Naive thymus-derived CD8-positive, alpha-beta T cell (primary cell): ENCODE measurements at regions of chr15 and their contacts with region 1.

Region 1: GRCh38 chr15:40338041-40338657 is 2.6 kb downstream of the CCDC9B start:
- DNase-seq: peak; percentile 64 to 87 (median 73)
- ATAC-seq: peak; percentile 89 to 94
- H3K4me3 Mint-ChIP-seq: peak overlapping the region in 5 of 10 donors; percentile 6 to 57 (median 22)
- H3K27ac Mint-ChIP-seq: peak overlapping the region in 3 of 10 donors; percentile 2 to 87 (median 45)
- H3K4me1 Mint-ChIP-seq: peaks cover 15 to 27% (median 26%) of the 10 kb centered on the region in 4 donors
- H3K27me3 Mint-ChIP-seq: peaks cover 0 to 5% (median 1%) of the 10 kb centered on the region in 5 donors

Region 2: GRCh38 chr15:40323239-40323952 is 14.8 kb before region 1 on chr15 and contains the start of gene INAFM2:
- POLR2A ChIA-PET with region 1: interaction called, 11 read pairs
- DNase-seq: peak; percentile 85 to 94 (median 91)
- ATAC-seq: peak; percentile 91 to 94
- H3K4me3 Mint-ChIP-seq: peak within 1 kb of the TSS; percentile 71 to 92 (median 82)
- H3K27ac Mint-ChIP-seq: peak within 1 kb of the TSS in 9 of 10 donors; percentile 28 to 85 (median 64)
- H3K4me1 Mint-ChIP-seq: peaks cover 19 to 46% (median 36%) of the 10 kb centered on the region in 4 donors
- H3K27me3 Mint-ChIP-seq: peaks cover 0 to 6% (median 0%) of the 10 kb centered on the region in 5 donors
- polyA plus RNA-seq, gene INAFM2: 0.69 to 2.5 (median 1.9) TPM